Naive thymus-derived CD4-positive, alpha-beta T cell (primary cell): ENCODE measurements at regions of chr9 and their contacts with region 1.

Region 1: DNA sequence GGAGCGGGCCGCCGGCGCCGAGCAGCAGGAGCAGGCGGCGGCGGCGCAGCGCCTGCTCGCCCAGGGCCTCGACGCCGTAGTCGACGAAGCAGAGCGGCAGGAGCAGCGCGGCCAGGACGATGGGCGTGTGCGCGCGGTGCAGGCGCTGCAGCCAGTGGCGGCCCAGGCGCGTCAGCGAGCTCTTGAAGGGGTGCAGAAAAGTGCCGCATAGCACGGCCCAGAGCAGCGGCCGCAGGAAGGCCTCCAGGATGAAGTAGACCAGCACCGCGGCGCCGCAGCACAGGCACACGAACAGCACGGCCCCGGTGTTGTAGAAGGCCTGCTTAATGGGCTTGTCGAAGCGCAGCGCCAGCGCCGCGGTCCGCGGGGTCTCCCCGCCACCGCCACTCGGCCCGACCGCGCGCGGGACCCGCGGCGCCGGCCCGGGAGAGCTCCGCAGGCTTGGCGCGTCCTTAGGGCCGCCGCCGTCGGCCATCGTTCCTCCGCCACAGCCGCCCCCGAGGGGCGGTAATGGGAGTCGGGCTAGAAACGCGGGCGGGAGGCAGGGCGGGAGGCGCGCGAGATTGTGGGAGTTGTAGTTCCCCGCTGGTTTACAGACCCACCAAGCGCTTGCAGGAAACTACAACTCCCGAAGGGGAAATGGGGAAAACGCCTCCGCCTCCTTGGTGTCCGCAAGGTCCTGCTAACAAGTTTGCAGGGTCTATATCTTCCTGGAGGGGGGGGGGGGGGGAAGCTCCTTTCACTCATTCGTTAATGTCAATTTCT is at the start of gene TMEM245:
- DNase-seq: peak; percentile 78 to 97 (median 95)
- ATAC-seq: peak; percentile 97
- H3K4me3 ChIP-seq: peak within 1 kb of the TSS; percentile 84
- H3K4me3 Mint-ChIP-seq: peak within 1 kb of the TSS; percentile 93 to 98 (median 94)
- H3K27ac ChIP-seq: peak within 1 kb of the TSS; percentile 92
- H3K27ac Mint-ChIP-seq: peak within 1 kb of the TSS; percentile 76 to 95 (median 91)
- H3K4me1 ChIP-seq: peaks cover 23 to 31% of the 10 kb centered on the region in 2 donors
- H3K4me1 Mint-ChIP-seq: peaks cover 36 to 47% (median 39%) of the 10 kb centered on the region in 7 donors
- H3K27me3 ChIP-seq: no peaks in the 10 kb centered on the region
- H3K27me3 Mint-ChIP-seq: no peaks in the 10 kb centered on the region
- total RNA-seq, gene TMEM245: 25.5 to 76.7 (median 29.2) TPM

Region 2: DNA sequence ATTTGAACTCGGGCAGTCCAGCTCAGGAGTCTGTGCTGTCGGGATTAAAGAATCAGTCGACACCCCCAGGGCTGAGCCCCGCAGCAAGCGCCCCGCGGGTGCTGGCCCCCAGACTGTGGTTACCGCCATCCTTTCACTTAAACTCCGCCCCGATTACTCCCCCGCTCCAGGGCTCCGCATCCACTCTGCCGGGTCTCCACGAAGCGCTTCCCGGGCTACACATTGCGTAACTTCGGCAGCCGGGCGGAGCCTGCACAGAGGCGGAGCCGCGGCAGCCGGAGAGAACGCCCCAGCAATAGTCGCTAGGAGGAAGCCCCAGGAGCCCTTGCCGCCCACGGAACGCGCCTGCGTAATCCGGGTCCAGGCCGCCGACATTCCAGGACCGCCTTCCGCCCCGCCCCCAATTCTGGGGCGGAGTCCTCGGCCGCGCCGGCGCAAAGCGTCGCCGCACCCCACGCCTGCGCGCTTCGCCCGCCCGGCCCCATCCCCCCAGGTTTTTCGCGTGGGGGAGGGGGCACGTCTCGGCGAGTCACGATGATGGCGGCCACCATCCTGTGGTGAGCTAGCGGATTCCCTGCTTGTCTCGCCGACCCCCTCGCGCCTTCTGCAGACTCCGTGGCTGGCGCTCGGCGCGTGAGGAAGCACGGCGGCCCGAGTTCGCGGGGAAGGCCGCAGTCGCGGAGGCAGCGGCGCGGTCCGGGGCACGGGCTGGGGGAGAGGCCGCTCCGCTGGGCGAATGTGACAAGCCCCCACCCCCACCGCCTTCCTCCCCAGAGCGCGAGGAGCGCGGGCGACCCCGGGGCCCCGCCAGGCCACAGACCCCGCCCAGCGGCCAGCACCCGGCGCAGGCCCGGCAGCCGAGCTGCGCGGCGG is 1836.6 kb before region 1 on chr9 and contains the start of gene RAD23B:
- CTCF ChIA-PET with region 1: no interaction called
- POLR2A ChIA-PET with region 1: no interaction called
- intact Hi-C with region 1: loop called (anchors 1 to 10 kb)
- DNase-seq: peak; percentile 97 to 100 (median 99)
- ATAC-seq: peak; percentile 94
- H3K4me3 ChIP-seq: peak within 1 kb of the TSS; percentile 78
- H3K4me3 Mint-ChIP-seq: peak within 1 kb of the TSS; percentile 89 to 99 (median 96)
- H3K27ac ChIP-seq: peak within 1 kb of the TSS; percentile 92
- H3K27ac Mint-ChIP-seq: peak within 1 kb of the TSS; percentile 85 to 97 (median 95)
- H3K4me1 ChIP-seq: peaks cover 9 to 31% of the 10 kb centered on the region in 2 donors
- H3K4me1 Mint-ChIP-seq: peaks cover 28 to 52% (median 37%) of the 10 kb centered on the region in 7 donors
- H3K27me3 ChIP-seq: no peaks in the 10 kb centered on the region
- H3K27me3 Mint-ChIP-seq: peaks cover 0 to 9% (median 0%) of the 10 kb centered on the region in 5 donors
- total RNA-seq, gene RAD23B: 48.7 to 102 (median 55.6) TPM

Region 3: GRCh38 chr9:109012876-109013678 is 106.5 kb before region 1 on chr9 and contains the start of gene CTNNAL1:
- CTCF ChIA-PET with region 1: no interaction called
- POLR2A ChIA-PET with region 1: no interaction called
- intact Hi-C with region 1: loop called (anchors 1 kb)
- DNase-seq: peak; percentile 68 to 88 (median 78)
- ATAC-seq: peak; percentile 98
- H3K4me3 ChIP-seq: peak within 1 kb of the TSS; percentile 72
- H3K4me3 Mint-ChIP-seq: peak within 1 kb of the TSS; percentile 93 to 99 (median 97)
- H3K27ac ChIP-seq: peak within 1 kb of the TSS; percentile 77
- H3K27ac Mint-ChIP-seq: peak within 1 kb of the TSS; percentile 79 to 95 (median 92)
- H3K4me1 ChIP-seq: peaks cover 6 to 13% of the 10 kb centered on the region in 2 donors
- H3K4me1 Mint-ChIP-seq: peaks cover 17 to 34% (median 21%) of the 10 kb centered on the region in 7 donors
- H3K27me3 ChIP-seq: no peaks in the 10 kb centered on the region
- H3K27me3 Mint-ChIP-seq: peaks cover 0 to 22% (median 4%) of the 10 kb centered on the region in 5 donors
- total RNA-seq, gene CTNNAL1: 1.1 to 9.9 (median 2.5) TPM

Region 4: DNA sequence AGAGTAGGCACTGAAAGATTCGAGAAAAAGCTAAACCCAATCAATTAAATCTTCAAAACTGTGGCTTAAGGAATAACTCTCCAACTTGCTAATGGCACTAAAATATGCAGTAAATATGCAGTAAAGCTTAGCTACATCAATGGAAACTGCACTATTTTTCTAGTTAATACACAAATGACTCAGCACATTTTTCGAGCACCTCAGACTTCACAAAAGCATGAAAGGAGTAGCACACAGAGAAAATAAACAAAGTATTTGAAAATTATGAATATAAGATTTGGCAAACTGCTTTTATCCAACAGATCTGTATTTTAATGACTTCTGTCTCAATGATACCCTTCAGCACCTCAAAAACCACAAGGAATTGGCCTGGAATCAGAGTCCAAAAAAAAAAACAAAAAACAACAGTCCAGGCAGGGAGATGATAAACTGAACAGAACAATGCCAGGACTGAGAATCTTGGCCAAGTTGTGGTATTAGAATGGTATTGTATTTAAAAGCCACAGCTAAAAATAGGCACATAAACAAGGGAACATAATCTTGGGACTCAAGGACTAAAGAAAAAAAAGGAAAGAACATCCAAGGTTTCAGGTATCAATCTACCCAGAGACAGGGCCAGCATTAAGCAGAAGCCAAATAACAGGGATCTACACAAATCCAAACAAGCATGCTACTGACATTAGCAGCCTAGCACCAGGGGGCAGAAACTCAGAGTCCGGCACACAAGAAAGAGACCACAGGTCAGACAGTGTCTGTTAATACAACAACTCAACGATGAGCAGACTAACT is 21.3 kb before region 1 on chr9:
- CTCF ChIA-PET with region 1: interaction called, 3 read pairs
- POLR2A ChIA-PET with region 1: interaction called, 41 read pairs
- intact Hi-C with region 1: loop called (anchors 1 kb)
- DNase-seq: no peak
- ATAC-seq: no peak
- H3K4me3 ChIP-seq: no peak overlapping the region
- H3K4me3 Mint-ChIP-seq: peak overlapping the region; percentile 22 to 69 (median 63)
- H3K27ac ChIP-seq: no peak overlapping the region
- H3K27ac Mint-ChIP-seq: peak overlapping the region; percentile 65 to 90 (median 74)
- H3K4me1 ChIP-seq: peaks cover 20 to 79% of the 10 kb centered on the region in 2 donors
- H3K4me1 Mint-ChIP-seq: peaks cover 57 to 97% (median 95%) of the 10 kb centered on the region in 7 donors
- H3K27me3 ChIP-seq: no peaks in the 10 kb centered on the region
- H3K27me3 Mint-ChIP-seq: no peaks in the 10 kb centered on the region

Region 5: DNA sequence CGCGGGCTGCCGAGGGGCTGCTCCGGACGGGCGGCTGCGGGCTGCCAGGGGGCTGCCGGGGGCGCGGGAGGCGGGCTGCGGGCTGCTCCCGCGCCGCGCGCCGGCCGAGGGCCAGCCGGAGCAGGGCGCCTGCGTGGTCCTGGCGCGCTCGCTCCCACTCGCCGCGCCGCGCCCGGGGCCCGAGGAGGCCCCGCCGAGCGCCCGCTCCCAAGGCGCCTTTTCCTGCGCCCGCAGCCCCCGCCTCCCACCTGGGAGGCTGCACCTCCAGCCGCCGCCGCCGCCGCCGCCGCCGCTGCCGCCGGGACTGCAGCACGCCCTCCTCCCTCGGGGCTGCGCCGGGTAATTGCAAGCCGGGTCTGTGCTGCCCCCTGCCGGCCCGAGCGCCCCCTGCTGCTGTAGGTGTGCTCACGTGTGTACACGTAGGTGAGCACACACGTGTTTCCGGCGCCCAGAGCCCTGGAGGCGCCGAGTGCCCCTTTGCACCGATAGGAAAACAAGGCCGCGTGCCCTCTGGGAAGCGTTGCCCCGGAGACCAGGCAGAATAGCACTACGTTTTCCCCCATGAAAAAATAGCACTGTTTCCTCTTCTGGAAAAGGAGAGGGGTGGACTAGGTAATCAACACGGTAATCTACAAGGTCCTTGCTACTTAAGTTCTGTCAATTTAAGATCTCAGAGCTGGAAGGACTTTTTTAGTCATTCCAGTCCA is 201.3 kb after region 1 on chr9 and contains the start of gene EPB41L4B:
- CTCF ChIA-PET with region 1: no interaction called
- POLR2A ChIA-PET with region 1: no interaction called
- intact Hi-C with region 1: loop called (anchors 1 to 5 kb)
- DNase-seq: peak; percentile 63 to 94 (median 81)
- ATAC-seq: peak; percentile 97
- H3K4me3 ChIP-seq: no peak within 1 kb of the TSS
- H3K4me3 Mint-ChIP-seq: peak within 1 kb of the TSS; percentile 68 to 93 (median 83)
- H3K27ac ChIP-seq: no peak within 1 kb of the TSS
- H3K27ac Mint-ChIP-seq: no peak within 1 kb of the TSS
- H3K4me1 ChIP-seq: peaks cover 0 to 10% of the 10 kb centered on the region in 2 donors
- H3K4me1 Mint-ChIP-seq: peaks cover 5 to 12% (median 10%) of the 10 kb centered on the region in 7 donors
- H3K27me3 ChIP-seq: peaks cover 3 to 4% of the 10 kb centered on the region in 2 donors
- H3K27me3 Mint-ChIP-seq: peaks cover 58 to 77% (median 67%) of the 10 kb centered on the region in 5 donors
- total RNA-seq, gene EPB41L4B: 0.36 TPM in 1 of 5 experiments, not detected in the others

Region 6: GRCh38 chr9:109894921-109895758 is 775.5 kb after region 1 on chr9:
- CTCF ChIA-PET with region 1: no interaction called
- POLR2A ChIA-PET with region 1: no interaction called
- intact Hi-C with region 1: loop called in 1 of 2 experiments (anchors 10 kb)
- DNase-seq: peak in 1 of 9 donors; percentile 58
- ATAC-seq: no peak
- H3K4me3 ChIP-seq: no peak overlapping the region
- H3K4me3 Mint-ChIP-seq: peak overlapping the region in 1 of 10 donors; percentile 58
- H3K27ac ChIP-seq: no peak overlapping the region
- H3K27ac Mint-ChIP-seq: peak overlapping the region in 1 of 9 donors; percentile 89
- H3K4me1 ChIP-seq: no peaks in the 10 kb centered on the region
- H3K4me1 Mint-ChIP-seq: peaks cover 0 to 59% (median 3%) of the 10 kb centered on the region in 7 donors
- H3K27me3 ChIP-seq: no peaks in the 10 kb centered on the region
- H3K27me3 Mint-ChIP-seq: no peaks in the 10 kb centered on the region